RWPE1 (cell line): ENCODE measurements at regions of chrX and their contacts with region 1.

Region 1: GRCh38 chrX:19121898-19122640 is at the start of gene ADGRG2:
- DNase-seq: no peak
- H3K27ac ChIP-seq: no peak within 1 kb of the TSS
- CTCF ChIP-seq: peak; percentile 20; the same call in 1 of the 2 replicates

Region 2: DNA sequence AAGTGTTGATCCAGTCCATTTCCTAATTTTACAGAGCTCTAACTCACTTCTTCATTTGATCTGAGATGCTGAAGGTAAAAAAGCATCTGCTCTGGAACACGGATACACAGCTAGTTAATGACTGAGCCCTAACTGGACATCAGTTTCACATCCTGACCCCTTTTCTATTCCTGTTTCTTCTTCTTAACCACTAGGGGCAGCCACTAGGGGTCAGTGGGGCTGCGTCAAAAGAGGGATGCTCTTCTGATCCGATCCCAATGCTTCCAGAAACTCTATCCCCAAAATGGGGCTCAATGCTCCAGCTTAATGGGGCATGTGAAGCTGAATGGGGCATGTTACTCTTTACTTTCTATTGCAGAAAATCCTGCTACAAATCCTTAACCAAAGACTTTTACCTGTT is 104.8 kb before region 1 on chrX:
- CTCF ChIA-PET with region 1: interaction called, 10 read pairs
- POLR2A ChIA-PET with region 1: no interaction called
- DNase-seq: peak; percentile 20
- H3K27ac ChIP-seq: no peak overlapping the region
- CTCF ChIP-seq: peak; percentile 32